ENCODE measurements at regions of chr5 and their contacts with region 1.

Region 1: DNA sequence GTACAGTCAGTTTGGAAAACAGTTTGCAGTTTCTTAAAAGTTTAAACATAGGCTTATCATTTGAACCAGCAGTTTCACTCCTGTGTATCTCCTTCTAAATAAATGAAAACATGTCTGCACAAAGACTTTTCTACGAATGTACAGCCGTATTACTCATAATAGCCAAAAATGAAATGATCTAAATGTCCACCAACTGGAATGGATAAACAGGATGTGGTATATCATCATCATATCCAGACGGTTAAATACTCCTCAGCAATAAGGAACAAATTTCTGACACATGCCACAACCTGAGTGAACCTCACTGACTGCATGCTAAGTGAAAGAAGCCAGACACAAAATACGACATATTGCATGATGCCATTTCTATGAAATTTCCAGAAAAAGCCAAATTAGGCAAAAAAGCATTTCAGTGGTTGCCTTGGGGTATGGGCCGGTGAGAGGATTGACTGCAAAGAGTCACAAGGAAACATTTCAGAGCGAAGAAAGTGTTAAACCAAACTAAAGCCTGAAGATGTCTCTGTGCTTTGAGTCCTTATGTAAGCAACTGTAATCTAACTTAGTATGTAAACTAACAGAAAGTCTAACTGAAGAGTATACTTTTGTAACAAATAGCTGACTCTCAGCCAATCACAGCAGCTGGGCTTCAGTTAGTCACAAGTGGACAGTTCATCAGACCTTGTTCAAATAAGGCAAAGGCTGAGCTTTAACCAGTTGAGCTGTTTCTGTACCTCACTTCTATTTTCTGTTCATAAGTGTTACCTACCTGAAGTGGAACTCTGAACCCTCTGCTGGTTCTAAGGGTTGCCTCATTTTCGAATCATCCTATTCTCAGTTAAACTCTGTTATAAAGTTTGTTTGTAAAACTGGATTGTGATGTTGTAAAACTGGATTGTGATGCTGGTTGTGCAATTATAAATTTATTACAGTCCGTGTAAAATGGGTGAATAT is 65.2 kb downstream of the TRIO start:
- DNase-seq: peak; percentile 91
- ATAC-seq: peak; percentile 88
- H3K4me3 ChIP-seq: peak overlapping the region; percentile 19 to 53 (median 41); a peak in 4 of 6 replicates
- H3K27ac ChIP-seq: peak overlapping the region; percentile 76
- H3K4me1 ChIP-seq: peaks cover 96% of the 10 kb centered on the region
- H3K27me3 ChIP-seq: no peaks in the 10 kb centered on the region
- CTCF ChIP-seq: peak; percentile 50
- EP300 ChIP-seq: peak in 1 of 2 experiments; percentile 69; a peak in 1 of 4 replicates
- POLR2A ChIP-seq: 0 out of 4 replicates have a peak, but pooled peaks of 1 of the 2 experiments have one; percentile 28
- RAD21 ChIP-seq: no peak

Region 2: GRCh38 chr5:14148890-14149671 is 59.3 kb before region 1 on chr5:
- CTCF ChIA-PET with region 1: no interaction called
- POLR2A ChIA-PET with region 1: interaction called, 17 read pairs
- in situ Hi-C with region 1: no loop called
- intact Hi-C with region 1: loop called (anchors 1 kb)
- DNase-seq: peak; percentile 83
- ATAC-seq: peak; percentile 81
- H3K4me3 ChIP-seq: peak overlapping the region; percentile 44 to 64 (median 51)
- H3K27ac ChIP-seq: peak overlapping the region; percentile 77
- H3K4me1 ChIP-seq: peaks cover 87% of the 10 kb centered on the region
- H3K27me3 ChIP-seq: no peaks in the 10 kb centered on the region
- CTCF ChIP-seq: no peak
- EP300 ChIP-seq: no peak
- POLR2A ChIP-seq: peak in 1 of 2 experiments; percentile 44; a peak in 1 of 4 replicates
- RAD21 ChIP-seq: 0 out of 2 replicates have a peak, but pooled peaks have one; percentile 19

Region 3: GRCh38 chr5:14168144-14168792 is 40.1 kb before region 1 on chr5:
- CTCF ChIA-PET with region 1: no interaction called
- POLR2A ChIA-PET with region 1: interaction called, 3 read pairs
- in situ Hi-C with region 1: loop called (anchors 5 kb)
- intact Hi-C with region 1: loop called (anchors 5 kb)
- DNase-seq: no peak
- ATAC-seq: peak; percentile 63
- H3K4me3 ChIP-seq: peak overlapping the region; percentile 12 to 29 (median 25); a peak in 4 of 6 replicates
- H3K27ac ChIP-seq: peak overlapping the region; percentile 60
- H3K4me1 ChIP-seq: peaks cover 96% of the 10 kb centered on the region
- H3K27me3 ChIP-seq: no peaks in the 10 kb centered on the region
- CTCF ChIP-seq: no peak
- EP300 ChIP-seq: no peak
- POLR2A ChIP-seq: no peak
- RAD21 ChIP-seq: no peak

Region 4: DNA sequence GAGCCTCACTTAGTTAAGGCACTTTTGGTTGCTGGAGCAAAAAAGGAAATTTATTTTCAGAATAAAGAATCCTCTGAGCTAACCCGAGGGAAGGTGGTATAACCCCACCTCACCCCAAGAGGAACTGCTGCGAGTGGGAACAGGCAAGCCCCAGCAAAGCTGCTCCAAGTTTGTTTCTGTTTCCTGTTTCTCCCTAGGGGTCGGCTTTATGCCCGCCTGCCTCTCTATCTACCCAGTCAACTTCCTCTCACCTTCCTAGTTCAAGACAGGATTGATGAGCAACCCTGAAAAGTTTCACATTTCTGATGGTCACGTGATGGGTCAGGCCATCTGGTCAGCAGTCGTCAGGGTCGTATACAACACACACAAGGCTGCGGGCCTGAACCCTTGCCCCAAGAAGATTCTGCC is 34.1 kb before region 1 on chr5:
- CTCF ChIA-PET with region 1: no interaction called
- POLR2A ChIA-PET with region 1: interaction called, 3 read pairs
- in situ Hi-C with region 1: loop called (anchors 5 kb)
- intact Hi-C with region 1: loop called (anchors 5 kb)
- DNase-seq: no peak
- ATAC-seq: peak; percentile 14; the same call in 1 of the 3 replicates
- H3K4me3 ChIP-seq: no peak overlapping the region
- H3K27ac ChIP-seq: peak overlapping the region; percentile 10
- H3K4me1 ChIP-seq: peaks cover 96% of the 10 kb centered on the region
- H3K27me3 ChIP-seq: no peaks in the 10 kb centered on the region
- CTCF ChIP-seq: no peak
- EP300 ChIP-seq: no peak
- POLR2A ChIP-seq: no peak
- RAD21 ChIP-seq: no peak

Region 5: GRCh38 chr5:14264604-14265316 is 56.4 kb after region 1 on chr5:
- CTCF ChIA-PET with region 1: no interaction called
- POLR2A ChIA-PET with region 1: interaction called, 3 read pairs
- in situ Hi-C with region 1: no loop called
- intact Hi-C with region 1: loop called (anchors 2 kb)
- DNase-seq: peak; percentile 78
- ATAC-seq: peak; percentile 97
- H3K4me3 ChIP-seq: peak overlapping the region; percentile 26 to 34 (median 32); a peak in 5 of 6 replicates
- H3K27ac ChIP-seq: no peak overlapping the region
- H3K4me1 ChIP-seq: peaks cover 64% of the 10 kb centered on the region
- H3K27me3 ChIP-seq: no peaks in the 10 kb centered on the region
- CTCF ChIP-seq: no peak
- EP300 ChIP-seq: no peak
- POLR2A ChIP-seq: peak; percentile 48 to 64; a peak in 3 of 4 replicates
- RAD21 ChIP-seq: peak; percentile 35; the same call in 1 of the 2 replicates

Region 6: GRCh38 chr5:14879937-14880589 is 671.7 kb after region 1 on chr5:
- CTCF ChIA-PET with region 1: no interaction called
- POLR2A ChIA-PET with region 1: no interaction called
- in situ Hi-C with region 1: no loop called
- intact Hi-C with region 1: loop called (anchors 10 kb)
- DNase-seq: peak; percentile 65
- ATAC-seq: peak; percentile 83
- H3K4me3 ChIP-seq: no peak overlapping the region
- H3K27ac ChIP-seq: no peak overlapping the region
- H3K4me1 ChIP-seq: peaks cover 29% of the 10 kb centered on the region
- H3K27me3 ChIP-seq: no peaks in the 10 kb centered on the region; a peak in 1 of 5 replicates
- CTCF ChIP-seq: no peak
- EP300 ChIP-seq: peak in 1 of 2 experiments; percentile 39; a peak in 1 of 4 replicates
- POLR2A ChIP-seq: no peak
- RAD21 ChIP-seq: no peak